ENCODE measurements at regions of chr2 and their contacts with region 1.

Region 1: DNA sequence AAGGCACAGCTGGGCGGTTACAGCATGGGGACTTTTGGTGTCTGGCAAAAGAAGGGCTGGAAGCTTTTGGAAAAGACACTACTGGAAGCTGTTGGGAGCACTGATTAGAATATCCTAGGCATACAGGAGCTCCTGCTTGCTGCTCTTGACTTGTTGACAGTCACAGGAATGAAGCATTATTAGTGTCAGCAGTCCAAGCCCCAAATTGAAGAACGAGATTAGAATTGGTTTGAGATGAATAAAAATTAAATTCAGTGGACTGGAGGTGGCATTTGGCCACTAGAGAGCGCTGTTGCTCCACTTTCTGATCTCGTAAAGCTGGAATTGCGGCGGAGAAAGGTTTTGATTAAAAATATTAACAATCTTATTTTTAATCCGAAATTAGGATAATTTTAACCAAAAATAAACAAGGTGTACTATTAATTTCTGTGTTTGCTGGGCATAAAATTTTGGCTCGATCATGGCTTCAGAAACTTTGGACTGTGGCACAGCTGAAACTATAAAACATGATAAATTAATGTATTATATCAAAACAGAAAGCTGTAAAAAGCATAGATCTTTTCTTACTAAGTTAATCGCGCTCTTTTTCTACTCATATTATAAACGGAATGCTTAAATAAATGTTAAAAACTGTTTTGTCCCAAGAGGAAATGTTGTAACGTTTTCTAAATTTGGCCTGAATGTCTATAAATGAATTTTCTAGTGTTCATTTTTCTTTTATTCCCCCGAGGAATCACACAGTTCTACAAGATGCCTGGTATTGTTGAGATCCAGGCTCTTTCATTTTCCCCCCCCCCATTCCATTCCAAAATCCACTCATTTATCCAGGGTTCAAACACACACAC is 2.4 kb upstream of the HOXD8 start:
- DNase-seq: peak; percentile 24
- H3K4me3 Mint-ChIP-seq: no peak overlapping the region
- H3K27ac Mint-ChIP-seq: peak overlapping the region; percentile 23
- H3K4me1 Mint-ChIP-seq: peaks cover 31% of the 10 kb centered on the region
- H3K27me3 Mint-ChIP-seq: peaks cover 76% of the 10 kb centered on the region

Region 2: GRCh38 chr2:176110975-176111663 is 16.0 kb before region 1 on chr2:
- intact Hi-C with region 1: loop called (anchors 2 kb)
- DNase-seq: no peak
- H3K4me3 Mint-ChIP-seq: no peak overlapping the region
- H3K27ac Mint-ChIP-seq: peak overlapping the region; percentile 68
- H3K4me1 Mint-ChIP-seq: peaks cover 3% of the 10 kb centered on the region
- H3K27me3 Mint-ChIP-seq: peaks cover 68% of the 10 kb centered on the region

Region 3: GRCh38 chr2:176454893-176455811 is 328.0 kb after region 1 on chr2:
- intact Hi-C with region 1: loop called (anchors 1 kb)
- DNase-seq: peak; percentile 59
- H3K4me3 Mint-ChIP-seq: no peak overlapping the region
- H3K27ac Mint-ChIP-seq: no peak overlapping the region
- H3K4me1 Mint-ChIP-seq: no peaks in the 10 kb centered on the region
- H3K27me3 Mint-ChIP-seq: peaks cover 13% of the 10 kb centered on the region

Region 4: GRCh38 chr2:176653479-176654443 is 526.6 kb after region 1 on chr2:
- intact Hi-C with region 1: loop called (anchors 1 kb)
- DNase-seq: no peak
- H3K4me3 Mint-ChIP-seq: no peak overlapping the region
- H3K27ac Mint-ChIP-seq: no peak overlapping the region
- H3K4me1 Mint-ChIP-seq: peaks cover 18% of the 10 kb centered on the region
- H3K27me3 Mint-ChIP-seq: peaks cover 45% of the 10 kb centered on the region

Measured in activated T-helper 1 cell treated with anti-CD3 and anti-CD28 coated beads, Interleukin-12 subunit alpha, Interleukin-12 subunit beta, Interleukin-2, Interleukin-4 antibody, amounts not matched to agents 30 ng/mL and 10 ng/mL and 1 ng/mL, durations not matched to agents 14 hours and 24 hours and 36 hours (primary cell).